ENCODE measurements at regions of chr9 and their contacts with region 1.

Region 1: GRCh38 chr9:97501177-97501971 is at the start of gene TMOD1:
- DNase-seq: peak; percentile 34
- H3K4me3 Mint-ChIP-seq: peak within 1 kb of the TSS; percentile 65
- H3K27ac Mint-ChIP-seq: no peak within 1 kb of the TSS
- H3K4me1 Mint-ChIP-seq: peaks cover 17% of the 10 kb centered on the region
- H3K27me3 Mint-ChIP-seq: peaks cover 49% of the 10 kb centered on the region
- total RNA-seq, gene TMOD1: 1.2 to 1.4 TPM

Region 2: GRCh38 chr9:97411789-97412625 is 89.4 kb before region 1 on chr9 and contains the start of gene TDRD7:
- CTCF ChIA-PET with region 1: interaction called, 8 read pairs
- intact Hi-C with region 1: loop called (anchors 1 kb)
- DNase-seq: peak; percentile 85
- H3K4me3 Mint-ChIP-seq: peak within 1 kb of the TSS; percentile 79
- H3K27ac Mint-ChIP-seq: peak within 1 kb of the TSS; percentile 44
- H3K4me1 Mint-ChIP-seq: peaks cover 13% of the 10 kb centered on the region
- H3K27me3 Mint-ChIP-seq: peaks cover 9% of the 10 kb centered on the region
- total RNA-seq, gene TDRD7: 6.9 to 7.4 TPM

Region 3: DNA sequence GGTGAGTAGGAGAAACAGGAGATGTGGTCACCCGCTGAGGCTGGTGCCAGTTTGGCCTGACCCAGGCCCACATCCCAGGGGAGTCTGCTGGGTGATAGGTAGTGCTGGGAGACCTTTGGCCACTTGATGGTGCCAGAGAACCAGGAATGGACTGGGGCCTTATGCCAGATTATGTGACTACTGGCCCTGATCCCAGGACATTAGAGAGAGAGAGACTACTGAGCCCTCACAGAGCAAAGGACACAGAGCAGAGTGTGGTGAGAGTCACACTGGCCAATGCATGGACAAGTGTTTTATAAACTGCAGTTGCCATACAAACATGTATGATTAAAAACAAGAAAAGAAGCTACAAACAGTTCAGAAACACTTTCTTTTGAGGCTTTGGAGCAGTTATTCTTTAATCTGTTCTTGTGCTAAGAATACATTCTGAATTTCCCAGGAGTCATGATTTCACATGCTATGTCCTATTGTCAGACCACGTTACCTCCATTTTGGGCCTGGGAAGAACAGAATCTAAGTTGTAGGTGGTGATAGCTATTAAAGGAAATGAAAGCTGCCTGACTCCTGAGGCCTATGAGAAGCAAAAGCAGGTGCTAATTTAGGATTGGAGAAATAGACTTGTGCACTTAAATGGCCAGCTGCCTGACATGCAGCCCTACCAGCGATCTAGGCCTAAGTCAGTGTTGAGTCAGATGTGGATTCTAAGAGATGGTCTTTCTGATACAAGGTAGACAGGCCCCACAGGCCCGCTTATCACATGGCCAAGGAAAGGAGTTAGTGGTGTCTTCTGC is 32.5 kb before region 1 on chr9:
- CTCF ChIA-PET with region 1: interaction called, 21 read pairs
- intact Hi-C with region 1: no loop called
- DNase-seq: peak; percentile 65
- H3K4me3 Mint-ChIP-seq: no peak overlapping the region
- H3K27ac Mint-ChIP-seq: no peak overlapping the region
- H3K4me1 Mint-ChIP-seq: no peaks in the 10 kb centered on the region
- H3K27me3 Mint-ChIP-seq: no peaks in the 10 kb centered on the region

Region 4: DNA sequence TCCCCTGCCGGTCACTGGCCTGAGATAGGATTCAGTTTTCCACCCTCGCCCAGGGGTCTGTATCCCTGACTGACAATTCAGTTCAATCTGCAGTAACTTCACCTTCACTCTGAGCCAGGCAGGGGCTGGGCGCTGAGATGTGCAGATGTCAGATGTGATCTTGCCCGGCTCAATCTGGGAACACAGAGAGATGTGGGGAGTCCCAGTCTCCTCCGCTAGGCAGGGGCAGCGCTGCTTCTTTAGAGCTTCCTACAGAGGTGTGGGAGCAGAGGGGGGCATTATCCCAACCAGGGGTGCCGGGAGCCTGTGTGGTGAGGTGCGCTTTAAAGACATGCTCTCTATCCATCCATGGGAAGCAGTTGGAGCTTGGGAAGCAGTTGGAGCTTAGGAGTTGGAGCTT is 14.7 kb after region 1 on chr9:
- CTCF ChIA-PET with region 1: no interaction called
- intact Hi-C with region 1: no loop called
- DNase-seq: no peak
- H3K4me3 Mint-ChIP-seq: no peak overlapping the region
- H3K27ac Mint-ChIP-seq: no peak overlapping the region
- H3K4me1 Mint-ChIP-seq: peaks cover 8% of the 10 kb centered on the region
- H3K27me3 Mint-ChIP-seq: peaks cover 36% of the 10 kb centered on the region

Region 5: DNA sequence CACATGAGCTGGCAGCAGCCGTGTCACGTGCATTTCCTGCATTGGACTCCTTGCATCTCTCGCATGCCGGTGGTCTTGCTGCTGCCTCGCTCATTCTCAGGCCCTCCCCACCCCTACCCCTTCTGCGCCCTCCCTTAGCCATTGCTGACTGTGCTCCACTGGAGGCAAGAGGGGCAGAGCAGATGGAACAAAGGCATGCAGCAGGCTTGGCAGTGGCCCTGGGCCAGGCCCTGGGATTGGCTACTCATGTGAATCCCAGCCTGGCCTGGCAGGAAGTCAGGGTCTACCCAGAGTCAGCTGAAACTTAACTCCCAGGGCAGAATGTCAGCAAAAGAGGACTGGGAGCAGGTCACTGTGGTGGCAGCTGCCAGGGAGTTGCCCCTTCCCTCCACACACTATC is 69.5 kb after region 1 on chr9:
- CTCF ChIA-PET with region 1: no interaction called
- intact Hi-C with region 1: loop called (anchors 5 kb)
- DNase-seq: no peak
- H3K4me3 Mint-ChIP-seq: no peak overlapping the region
- H3K27ac Mint-ChIP-seq: no peak overlapping the region
- H3K4me1 Mint-ChIP-seq: peaks cover 16% of the 10 kb centered on the region
- H3K27me3 Mint-ChIP-seq: no peaks in the 10 kb centered on the region

Region 6: GRCh38 chr9:97786341-97786740 is 285.0 kb after region 1 on chr9:
- CTCF ChIA-PET with region 1: no interaction called
- intact Hi-C with region 1: no loop called
- DNase-seq: no peak
- H3K4me3 Mint-ChIP-seq: no peak overlapping the region
- H3K27ac Mint-ChIP-seq: no peak overlapping the region
- H3K4me1 Mint-ChIP-seq: no peaks in the 10 kb centered on the region
- H3K27me3 Mint-ChIP-seq: peaks cover 2% of the 10 kb centered on the region

Measured in activated naive CD4-positive, alpha-beta T cell treated with anti-CD3 and anti-CD28 coated beads for 36 hours (primary cell).